T-cell (primary cell): ENCODE measurements at regions of chr11 and their contacts with region 1.

Region 1: GRCh38 chr11:112100462-112100861 is 13.8 kb downstream of the SDHD start:
- DNase-seq: no peak
- ATAC-seq: no peak
- H3K4me3 ChIP-seq: no peak overlapping the region
- H3K4me3 Mint-ChIP-seq: no peak overlapping the region
- H3K27ac ChIP-seq: no peak overlapping the region
- H3K27ac Mint-ChIP-seq: no peak overlapping the region
- H3K4me1 ChIP-seq: no peaks in the 10 kb centered on the region
- H3K4me1 Mint-ChIP-seq: peaks cover 0 to 11% (median 0%) of the 10 kb centered on the region in 3 donors
- H3K27me3 ChIP-seq: no peaks in the 10 kb centered on the region
- H3K27me3 Mint-ChIP-seq: no peaks in the 10 kb centered on the region

Region 2: DNA sequence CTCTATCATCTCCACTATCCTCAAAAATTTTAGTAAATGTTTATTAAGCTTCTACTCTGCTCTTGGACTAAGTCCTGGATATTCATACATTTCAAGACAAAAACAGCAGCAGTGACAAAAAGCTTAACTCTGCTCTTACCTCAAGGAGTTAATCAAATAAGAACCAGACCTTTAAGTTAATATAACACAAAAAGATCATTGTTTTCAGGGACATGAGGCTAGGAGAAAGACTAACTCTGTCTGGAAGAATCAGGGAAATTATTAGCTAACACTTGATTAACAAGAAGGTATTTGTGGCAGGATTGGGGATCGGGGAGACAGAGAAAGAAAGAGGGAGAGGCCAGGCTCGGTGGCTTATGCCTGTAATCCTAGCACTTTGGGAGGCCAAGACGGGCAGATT is 408.7 kb before region 1 on chr11:
- CTCF ChIA-PET with region 1: interaction called in 1 of 2 experiments, 11 read pairs
- POLR2A ChIA-PET with region 1: no interaction called
- DNase-seq: no peak
- ATAC-seq: no peak
- H3K4me3 ChIP-seq: no peak overlapping the region
- H3K4me3 Mint-ChIP-seq: no peak overlapping the region
- H3K27ac ChIP-seq: no peak overlapping the region
- H3K27ac Mint-ChIP-seq: no peak overlapping the region
- H3K4me1 ChIP-seq: no peaks in the 10 kb centered on the region
- H3K4me1 Mint-ChIP-seq: peaks cover 0 to 2% (median 0%) of the 10 kb centered on the region in 3 donors
- H3K27me3 ChIP-seq: no peaks in the 10 kb centered on the region
- H3K27me3 Mint-ChIP-seq: no peaks in the 10 kb centered on the region